ENCODE measurements at regions of chr6 and their contacts with region 1.

Region 1: GRCh38 chr6:107830060-107830459 is 5.9 kb upstream of the SCML4 start:
- DNase-seq: no peak
- H3K4me3 ChIP-seq: no peak overlapping the region
- H3K4me3 Mint-ChIP-seq: no peak overlapping the region
- H3K27ac Mint-ChIP-seq: no peak overlapping the region
- H3K4me1 ChIP-seq: no peaks in the 10 kb centered on the region
- H3K4me1 Mint-ChIP-seq: no peaks in the 10 kb centered on the region
- H3K27me3 ChIP-seq: no peaks in the 10 kb centered on the region
- H3K27me3 Mint-ChIP-seq: no peaks in the 10 kb centered on the region
- CTCF ChIP-seq: no peak

Region 2: DNA sequence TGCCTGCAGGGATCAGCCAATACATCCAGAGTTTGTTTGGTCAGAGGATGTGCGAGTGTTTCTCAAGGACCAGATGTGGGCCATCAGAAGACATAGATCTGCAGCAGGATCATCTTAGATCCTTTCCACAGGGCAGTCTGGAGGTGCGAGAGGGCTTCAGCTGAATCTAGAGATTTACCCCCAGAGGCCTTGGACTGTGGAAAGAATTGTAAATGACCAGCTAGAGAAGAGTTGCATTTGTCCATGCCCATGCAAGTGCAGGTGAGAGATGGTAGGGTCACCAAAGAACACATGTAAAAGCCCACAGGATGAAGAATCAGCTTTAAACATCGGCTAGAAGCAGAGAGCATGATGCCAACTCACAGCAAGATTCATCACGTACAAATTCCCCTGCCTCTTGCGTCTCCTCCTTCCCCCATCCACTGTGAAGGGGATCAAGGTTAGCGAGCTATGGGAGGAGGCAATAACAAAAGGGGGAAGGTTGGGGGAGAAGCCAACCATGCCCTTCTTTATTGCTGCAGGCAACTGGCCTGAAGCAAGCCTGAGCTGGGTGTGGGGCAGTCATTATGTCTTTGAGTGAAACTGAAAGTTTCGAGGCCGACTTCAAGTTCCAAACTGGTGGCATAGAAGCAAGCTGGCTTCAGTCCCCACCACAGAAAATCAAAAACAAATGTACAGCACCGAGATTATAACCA is 89.4 kb before region 1 on chr6:
- CTCF ChIA-PET with region 1: no interaction called
- POLR2A ChIA-PET with region 1: interaction called, 10 read pairs
- intact Hi-C with region 1: no loop called
- DNase-seq: no peak
- H3K4me3 ChIP-seq: no peak overlapping the region
- H3K4me3 Mint-ChIP-seq: no peak overlapping the region
- H3K27ac Mint-ChIP-seq: no peak overlapping the region
- H3K4me1 ChIP-seq: no peaks in the 10 kb centered on the region
- H3K4me1 Mint-ChIP-seq: no peaks in the 10 kb centered on the region
- H3K27me3 ChIP-seq: no peaks in the 10 kb centered on the region
- H3K27me3 Mint-ChIP-seq: peaks cover 5% of the 10 kb centered on the region
- CTCF ChIP-seq: no peak

Measured in Caco-2 (cell line).